ENCODE measurements at regions of chr1 and their contacts with region 1.

Region 1: GRCh38 chr1:24111996-24112779 is at the start of gene MYOM3:
- DNase-seq: peak; percentile 74
- ATAC-seq: peak; percentile 93
- H3K4me3 ChIP-seq: peak within 1 kb of the TSS; percentile 43; the same call in 1 of the 2 replicates
- H3K27ac ChIP-seq: no peak within 1 kb of the TSS
- H3K4me1 ChIP-seq: peaks cover 24% of the 10 kb centered on the region
- H3K27me3 ChIP-seq: no peaks in the 10 kb centered on the region
- CTCF ChIP-seq: peak; percentile 80
- total RNA-seq, gene MYOM3: 0.04 and 0.12 TPM in 2 replicates

Region 2: DNA sequence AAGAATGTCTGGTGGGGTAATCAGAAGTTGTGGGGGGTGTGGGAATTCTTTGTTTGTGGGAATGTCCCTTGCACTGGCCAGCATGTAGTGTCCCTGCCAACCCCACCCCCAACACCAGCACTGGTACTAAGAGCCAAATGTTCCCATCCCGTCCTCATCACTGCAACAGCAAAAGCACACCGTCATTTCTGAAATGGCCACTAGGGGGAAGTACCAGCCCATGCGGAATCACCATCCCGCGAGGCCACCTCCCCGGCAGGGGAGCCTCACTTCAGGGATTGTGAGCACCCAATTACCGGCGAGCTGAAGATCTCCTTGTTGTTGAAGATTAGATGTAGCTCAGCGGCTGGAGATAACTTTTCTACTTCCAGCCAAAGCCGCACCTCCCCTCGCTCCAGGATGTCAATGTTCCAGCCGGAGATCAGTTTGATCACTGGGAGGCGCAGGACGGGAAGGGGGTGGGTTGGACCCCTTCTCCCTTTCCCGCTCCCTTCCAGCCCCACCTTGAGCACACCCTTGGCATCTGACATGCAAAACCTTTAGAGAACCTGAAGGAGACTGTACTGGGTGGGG is 41.3 kb before region 1 on chr1:
- CTCF ChIA-PET with region 1: interaction called, 3 read pairs
- POLR2A ChIA-PET with region 1: no interaction called
- intact Hi-C with region 1: loop called (anchors 2 kb)
- DNase-seq: peak; percentile 94
- ATAC-seq: peak; percentile 97
- H3K4me3 ChIP-seq: no peak overlapping the region
- H3K27ac ChIP-seq: no peak overlapping the region
- H3K4me1 ChIP-seq: peaks cover 3% of the 10 kb centered on the region; the same call in 1 of the 2 replicates
- H3K27me3 ChIP-seq: no peaks in the 10 kb centered on the region
- CTCF ChIP-seq: peak; percentile 94

Region 3: GRCh38 chr1:24094554-24094953 is 17.6 kb before region 1 on chr1:
- CTCF ChIA-PET with region 1: no interaction called
- POLR2A ChIA-PET with region 1: no interaction called
- intact Hi-C with region 1: no loop called
- DNase-seq: no peak
- ATAC-seq: no peak
- H3K4me3 ChIP-seq: no peak overlapping the region
- H3K27ac ChIP-seq: no peak overlapping the region
- H3K4me1 ChIP-seq: no peaks in the 10 kb centered on the region
- H3K27me3 ChIP-seq: no peaks in the 10 kb centered on the region
- CTCF ChIP-seq: peak; percentile 27; the same call in 1 of the 2 replicates